Psoas muscle (tissue), 8 donors: ENCODE measurements at regions of chr1 and their contacts with region 1.

Region 1: GRCh38 chr1:54287176-54287650 is 87.2 kb downstream of the MRPL37 start:
- DNase-seq: peak; percentile 79 to 91
- ATAC-seq: peak; percentile 87 to 92 (median 87)
- H3K4me3 ChIP-seq: peak overlapping the region; percentile 37
- H3K27ac ChIP-seq: peak overlapping the region; percentile 90
- H3K4me1 ChIP-seq: peaks cover 75% of the 10 kb centered on the region
- H3K27me3 ChIP-seq: no peaks in the 10 kb centered on the region
- CTCF ChIP-seq: no peak

Region 2: GRCh38 chr1:54390655-54391054 is 103.4 kb after region 1 on chr1:
- intact Hi-C with region 1: loop called in 1 of 2 experiments (anchors 5 kb)
- DNase-seq: peak; percentile 45 to 82
- ATAC-seq: peak; percentile 59 to 73 (median 64)
- H3K4me3 ChIP-seq: peak overlapping the region; percentile 56
- H3K27ac ChIP-seq: peak overlapping the region; percentile 79
- H3K4me1 ChIP-seq: peaks cover 89% of the 10 kb centered on the region
- H3K27me3 ChIP-seq: no peaks in the 10 kb centered on the region
- CTCF ChIP-seq: no peak

Region 3: GRCh38 chr1:55204997-55205396 is 917.8 kb after region 1 on chr1:
- intact Hi-C with region 1: no loop called
- DNase-seq: no peak
- ATAC-seq: peak; percentile 68 to 86 (median 78)
- H3K4me3 ChIP-seq: no peak overlapping the region
- H3K27ac ChIP-seq: peak overlapping the region; percentile 48
- H3K4me1 ChIP-seq: peaks cover 74% of the 10 kb centered on the region
- H3K27me3 ChIP-seq: no peaks in the 10 kb centered on the region
- CTCF ChIP-seq: no peak